MCF 10A (cell line): ENCODE measurements at regions of chr20 and their contacts with region 1.

Region 1: GRCh38 chr20:4082406-4083097 is 67.2 kb upstream of the RNF24 start:
- DNase-seq: no peak
- H3K4me3 Mint-ChIP-seq: no peak overlapping the region
- H3K27ac Mint-ChIP-seq: no peak overlapping the region
- H3K4me1 Mint-ChIP-seq: peaks cover 22% of the 10 kb centered on the region
- H3K27me3 Mint-ChIP-seq: no peaks in the 10 kb centered on the region
- CTCF ChIP-seq: no peak

Region 2: DNA sequence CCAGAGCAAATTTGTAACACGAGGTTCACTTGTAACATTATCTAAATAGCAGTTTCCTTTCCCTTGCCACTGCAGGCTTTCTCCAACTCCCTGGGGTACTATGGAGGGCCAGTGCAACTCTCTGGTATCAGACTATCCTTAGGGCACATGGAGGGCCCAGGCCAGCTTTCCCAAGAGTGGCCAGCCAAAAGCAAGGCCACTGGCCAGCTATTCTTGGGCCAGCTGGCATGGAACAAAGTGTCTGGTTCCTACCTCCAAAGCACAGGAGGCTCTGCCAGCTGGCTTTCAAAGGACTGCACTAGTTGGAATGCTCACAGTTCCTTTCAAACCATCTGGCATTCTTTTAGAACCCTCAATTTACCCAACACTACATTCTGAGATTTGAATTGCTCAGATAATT is 75.9 kb before region 1 on chr20:
- CTCF ChIA-PET with region 1: interaction called, 81 read pairs
- POLR2A ChIA-PET with region 1: interaction called, 3 read pairs
- intact Hi-C with region 1: no loop called
- DNase-seq: no peak
- H3K4me3 Mint-ChIP-seq: no peak overlapping the region
- H3K27ac Mint-ChIP-seq: peak overlapping the region; percentile 46
- H3K4me1 Mint-ChIP-seq: peaks cover 18% of the 10 kb centered on the region
- H3K27me3 Mint-ChIP-seq: no peaks in the 10 kb centered on the region
- CTCF ChIP-seq: no peak

Region 3: DNA sequence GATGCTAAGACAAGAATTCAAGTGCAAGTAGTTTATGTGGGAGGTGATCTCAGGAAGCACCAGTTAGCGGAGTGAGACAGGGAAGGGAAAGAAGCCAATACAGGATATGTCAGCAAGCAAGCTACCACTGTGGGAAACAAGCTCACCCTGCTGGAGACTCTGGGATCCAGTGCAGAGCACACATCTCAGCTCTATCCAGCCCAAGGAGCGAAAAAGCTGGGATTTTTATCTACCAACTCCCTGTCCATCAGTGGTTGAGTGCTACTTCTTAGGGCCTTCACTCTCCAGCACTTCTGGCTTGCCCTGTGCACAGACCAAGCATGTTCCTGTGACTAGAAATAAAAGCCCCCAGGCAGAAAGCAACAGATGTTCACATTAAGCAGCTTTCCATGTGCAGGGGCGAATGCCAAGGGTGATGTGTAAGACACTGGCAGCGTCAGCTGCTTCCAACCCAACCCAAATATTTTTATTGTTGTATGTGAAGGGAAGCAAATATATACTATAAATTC is 56.4 kb before region 1 on chr20:
- CTCF ChIA-PET with region 1: interaction called, 11 read pairs
- POLR2A ChIA-PET with region 1: interaction called, 10 read pairs
- intact Hi-C with region 1: no loop called
- DNase-seq: peak; percentile 79
- H3K4me3 Mint-ChIP-seq: no peak overlapping the region
- H3K27ac Mint-ChIP-seq: peak overlapping the region; percentile 17
- H3K4me1 Mint-ChIP-seq: peaks cover 32% of the 10 kb centered on the region
- H3K27me3 Mint-ChIP-seq: no peaks in the 10 kb centered on the region
- CTCF ChIP-seq: peak; percentile 11

Region 4: DNA sequence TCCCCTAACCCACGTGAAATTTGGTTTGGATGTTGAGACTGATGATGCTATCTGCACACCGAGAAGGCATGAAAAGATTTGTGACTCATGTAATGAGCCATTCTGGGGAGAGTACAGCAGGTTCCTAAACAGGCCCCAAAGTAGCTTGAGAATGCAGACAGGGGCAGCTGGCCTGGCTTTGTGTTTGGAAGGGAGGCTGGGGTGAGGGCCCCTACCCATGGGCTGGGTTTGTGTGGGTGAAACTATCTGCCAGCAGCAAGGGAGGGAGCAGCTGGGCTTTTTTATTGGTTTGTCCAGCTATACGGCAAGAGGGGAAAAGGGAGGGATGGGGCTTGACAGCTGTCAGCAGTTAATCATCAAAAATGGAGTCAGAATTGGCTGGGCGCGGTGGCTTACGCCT is 19.8 kb after region 1 on chr20:
- CTCF ChIA-PET with region 1: interaction called, 12 read pairs
- POLR2A ChIA-PET with region 1: interaction called, 4 read pairs
- intact Hi-C with region 1: no loop called
- DNase-seq: peak; percentile 62
- H3K4me3 Mint-ChIP-seq: peak overlapping the region; percentile 48
- H3K27ac Mint-ChIP-seq: peak overlapping the region; percentile 93
- H3K4me1 Mint-ChIP-seq: peaks cover 18% of the 10 kb centered on the region
- H3K27me3 Mint-ChIP-seq: no peaks in the 10 kb centered on the region
- CTCF ChIP-seq: no peak

Region 5: DNA sequence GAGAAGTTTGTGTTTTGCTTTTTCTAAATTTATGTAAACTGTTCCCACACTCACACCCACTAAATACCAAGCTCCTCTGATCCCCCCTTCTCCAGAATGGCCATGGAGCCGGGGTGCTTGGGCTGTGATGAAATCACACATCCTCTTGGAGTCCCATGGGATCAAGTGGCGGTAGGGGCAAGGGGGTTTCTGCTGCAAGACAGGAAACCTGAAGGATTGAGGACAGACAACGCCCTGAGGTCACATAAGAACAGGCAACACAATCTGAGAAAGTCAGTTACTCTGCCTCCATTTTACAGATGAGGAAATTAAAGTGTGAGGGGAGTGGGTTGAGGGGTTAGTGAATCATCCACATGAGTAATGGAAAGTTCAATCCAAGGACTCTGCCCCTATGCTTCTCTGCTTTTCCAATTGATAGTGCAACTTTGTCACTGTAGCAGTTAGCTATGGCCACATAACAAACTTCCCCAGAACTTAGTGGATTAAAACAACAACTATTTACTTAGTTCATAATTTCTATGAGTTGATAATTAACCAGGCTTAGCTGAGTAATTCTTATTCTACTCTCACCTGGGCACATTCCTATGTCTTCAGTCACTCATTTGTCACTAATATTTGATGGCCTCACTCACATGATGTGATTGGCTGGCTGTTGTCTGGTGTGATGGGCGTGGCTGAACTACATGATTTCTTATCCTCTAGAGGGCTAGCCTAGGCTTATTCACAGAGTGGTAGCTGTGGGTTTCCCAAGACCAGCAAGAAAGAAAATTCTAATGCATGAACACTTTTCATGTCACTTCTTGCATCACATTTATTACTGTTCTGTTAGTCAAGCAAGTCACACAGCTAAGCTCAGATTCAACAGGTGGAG is 243.9 kb after region 1 on chr20:
- CTCF ChIA-PET with region 1: no interaction called
- POLR2A ChIA-PET with region 1: no interaction called
- intact Hi-C with region 1: no loop called
- DNase-seq: no peak
- H3K4me3 Mint-ChIP-seq: no peak overlapping the region
- H3K27ac Mint-ChIP-seq: no peak overlapping the region
- H3K4me1 Mint-ChIP-seq: no peaks in the 10 kb centered on the region
- H3K27me3 Mint-ChIP-seq: no peaks in the 10 kb centered on the region
- CTCF ChIP-seq: no peak